Transverse colon (tissue), 4 donors: ENCODE measurements at regions of chrX and their contacts with region 1.

Region 1: GRCh38 chrX:12138361-12139313 is at the start of gene FRMPD4:
- DNase-seq: no peak
- H3K4me3 ChIP-seq: peak within 1 kb of the TSS in 3 of 4 donors; percentile 9 to 39 (median 22)
- H3K27ac ChIP-seq: peak within 1 kb of the TSS in 1 of 4 donors; percentile 11
- H3K4me1 ChIP-seq: no peaks in the 10 kb centered on the region
- H3K27me3 ChIP-seq: no peaks in the 10 kb centered on the region
- CTCF ChIP-seq: peak in 1 of 5 experiments; percentile 10
- EP300 ChIP-seq: no peak
- POLR2A ChIP-seq: no peak
- total RNA-seq, gene FRMPD4: 0.79 to 1.5 (median 0.82) TPM in 3 of 4 donors, not detected in the other

Region 2: GRCh38 chrX:12447448-12448064 is 308.9 kb after region 1 on chrX:
- in situ Hi-C with region 1: no loop called
- intact Hi-C with region 1: loop called (anchors 2 kb)
- DNase-seq: no peak
- H3K4me3 ChIP-seq: no peak overlapping the region
- H3K27ac ChIP-seq: no peak overlapping the region
- H3K4me1 ChIP-seq: no peaks in the 10 kb centered on the region
- H3K27me3 ChIP-seq: no peaks in the 10 kb centered on the region
- CTCF ChIP-seq: no peak
- EP300 ChIP-seq: no peak
- POLR2A ChIP-seq: no peak